ENCODE measurements at regions of chr5 and their contacts with region 1.

Region 1: DNA sequence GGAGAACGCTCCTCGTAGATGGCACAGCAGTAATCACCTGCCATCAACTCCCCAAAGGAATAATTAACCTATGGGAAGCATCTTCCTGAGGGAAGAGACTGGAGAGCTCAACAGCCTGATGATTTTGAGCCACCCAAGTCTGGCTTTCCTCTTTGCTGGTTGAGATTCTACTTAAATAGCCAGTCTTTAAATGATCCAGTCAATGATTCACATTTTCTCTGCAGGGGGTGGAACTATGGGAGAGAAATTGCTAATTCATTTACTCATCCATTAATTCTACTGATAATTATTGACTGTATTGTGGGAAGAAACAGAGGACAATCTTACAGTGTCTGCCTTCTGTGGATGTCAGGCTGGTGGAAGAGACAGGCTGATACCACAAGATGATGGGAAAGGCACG is 355.0 kb upstream of the PANK3 start:
- DNase-seq: no peak
- CTCF ChIP-seq: no peak

Region 2: DNA sequence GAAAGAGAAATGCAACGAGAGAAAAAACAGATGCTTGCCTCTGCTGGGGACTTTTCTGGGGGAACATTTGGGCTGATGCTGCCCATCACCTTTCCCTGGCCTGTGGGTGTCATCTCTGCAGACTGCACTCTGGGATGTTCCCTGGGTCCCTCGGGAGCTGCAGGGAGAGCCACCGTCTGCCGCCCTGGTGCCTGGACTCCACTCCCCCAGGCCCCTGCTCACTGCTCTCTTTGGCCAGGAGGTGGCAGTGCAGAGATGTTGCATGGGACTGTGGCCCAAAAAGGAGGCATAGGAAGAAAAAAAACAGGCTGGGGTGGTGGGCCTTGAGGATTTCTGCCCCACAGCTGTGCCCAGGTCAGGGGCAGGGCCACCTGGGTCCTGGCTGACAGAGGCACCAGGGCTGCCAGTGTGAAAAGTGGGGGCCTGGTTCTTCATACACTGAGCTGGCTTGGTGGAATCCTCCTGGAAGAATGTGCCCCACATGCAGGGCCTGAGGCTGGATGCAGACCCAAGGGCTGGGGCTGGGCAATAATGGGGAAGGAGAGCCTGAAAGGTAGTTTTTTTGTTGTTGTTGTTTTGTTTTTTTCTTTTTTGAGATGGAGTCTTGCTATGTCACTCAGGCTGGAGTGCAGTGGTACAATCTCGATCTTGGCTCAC is 13.2 kb after region 1 on chr5:
- CTCF ChIA-PET with region 1: interaction called, 19 read pairs
- POLR2A ChIA-PET with region 1: no interaction called
- DNase-seq: peak; percentile 69
- CTCF ChIP-seq: peak; percentile 74

Measured in GM10248 (cell line).